ENCODE measurements at regions of chr11 and their contacts with region 1.

Region 1: GRCh38 chr11:11022125-11022730 is 164.4 kb upstream of the ZBED5 start:
- DNase-seq: peak in 1 of 2 donors; percentile 21
- ATAC-seq: no peak
- H3K4me3 ChIP-seq: no peak overlapping the region
- H3K27ac ChIP-seq: no peak overlapping the region
- H3K4me1 ChIP-seq: no peaks in the 10 kb centered on the region
- H3K27me3 ChIP-seq: no peaks in the 10 kb centered on the region
- CTCF ChIP-seq: peak in 8 of 9 donors; percentile 32 to 69 (median 62)

Region 2: DNA sequence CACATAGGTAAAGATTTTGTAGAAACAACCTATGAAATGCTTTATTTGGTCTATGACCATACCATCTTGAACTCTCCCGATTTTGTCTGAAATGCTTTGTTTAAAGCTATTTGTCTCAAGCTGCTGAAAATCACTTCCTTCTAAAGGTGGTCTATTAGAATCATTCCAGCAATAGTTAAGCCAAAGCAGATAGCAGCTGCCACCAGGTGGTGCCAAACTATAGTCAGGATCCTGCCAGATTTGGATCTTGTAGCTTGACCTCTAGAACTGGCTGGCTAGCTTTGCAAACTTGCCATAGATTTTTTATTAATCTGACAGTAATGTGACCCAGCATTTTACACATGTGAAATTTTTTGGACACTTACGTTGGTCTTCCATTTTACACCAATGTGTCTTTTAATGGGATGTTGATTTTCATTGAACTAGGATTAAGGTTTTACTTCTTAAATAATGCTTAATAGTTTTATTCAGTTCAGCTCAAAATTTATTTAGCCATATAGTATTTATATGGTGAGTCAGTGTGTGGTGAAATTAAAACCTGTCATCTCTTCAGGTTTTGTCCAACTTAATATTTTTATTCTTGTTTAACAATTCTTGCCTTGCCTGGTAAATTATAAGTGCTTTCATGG is 251.5 kb before region 1 on chr11:
- intact Hi-C with region 1: loop called in 1 of 10 experiments (anchors 5 kb)
- DNase-seq: peak; percentile 47 to 67
- ATAC-seq: peak in 7 of 8 donors; percentile 39 to 81 (median 75)
- H3K4me3 ChIP-seq: no peak overlapping the region
- H3K27ac ChIP-seq: peak overlapping the region in 8 of 10 donors; percentile 33 to 75 (median 58)
- H3K4me1 ChIP-seq: peaks cover 0 to 31% (median 10%) of the 10 kb centered on the region in 9 donors
- H3K27me3 ChIP-seq: no peaks in the 10 kb centered on the region
- CTCF ChIP-seq: peak; percentile 37 to 85 (median 72)

Region 3: DNA sequence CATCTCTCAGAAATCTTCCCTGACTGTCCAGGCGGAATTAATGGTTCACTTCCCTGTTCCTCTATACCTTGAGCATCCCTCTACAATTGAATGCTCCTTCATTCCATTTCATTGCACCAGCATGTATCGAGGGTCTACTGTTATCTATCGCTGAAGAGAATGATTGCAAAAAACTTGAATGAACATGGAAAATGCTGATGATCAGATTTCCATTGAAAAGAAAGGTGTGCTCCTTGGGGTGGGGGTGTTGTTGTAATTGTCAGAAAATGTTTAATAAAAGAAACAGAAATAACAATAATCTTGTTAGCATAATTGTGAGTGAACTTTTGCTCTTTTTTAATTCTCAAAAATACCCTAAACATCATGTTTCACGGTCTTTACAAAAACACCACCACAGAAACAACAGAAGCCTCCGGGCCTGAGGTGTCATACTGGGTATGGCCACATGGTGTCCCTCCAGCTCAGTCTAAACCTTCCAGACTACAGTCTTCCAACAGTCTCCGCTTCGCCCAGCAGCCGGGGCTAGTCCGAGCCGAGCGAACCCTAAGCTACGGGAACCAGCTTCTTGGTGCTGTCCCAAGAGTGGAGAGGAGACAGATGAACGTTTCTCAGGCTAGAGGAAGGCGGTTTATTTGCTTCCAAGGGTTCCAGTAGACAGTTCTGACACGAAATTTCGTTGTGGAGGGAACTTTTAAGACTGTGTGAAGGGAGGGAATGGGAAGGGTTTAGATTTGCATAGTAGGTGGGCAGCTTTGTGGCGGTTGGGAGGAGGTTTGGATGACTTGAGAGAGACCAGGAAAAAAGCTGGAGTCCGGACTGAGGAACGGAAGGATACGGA is 88.6 kb before region 1 on chr11:
- intact Hi-C with region 1: loop called (anchors 1 to 5 kb)
- DNase-seq: peak; percentile 87 to 91
- ATAC-seq: peak; percentile 78 to 93 (median 89)
- H3K4me3 ChIP-seq: peak overlapping the region; percentile 7 to 56 (median 52)
- H3K27ac ChIP-seq: peak overlapping the region; percentile 28 to 89 (median 72)
- H3K4me1 ChIP-seq: peaks cover 0 to 33% (median 17%) of the 10 kb centered on the region in 9 donors
- H3K27me3 ChIP-seq: peaks cover 0 to 49% (median 0%) of the 10 kb centered on the region in 7 donors
- CTCF ChIP-seq: peak; percentile 90 to 99 (median 95)

Region 4: GRCh38 chr11:11000579-11001283 is 21.5 kb before region 1 on chr11:
- intact Hi-C with region 1: no loop called
- DNase-seq: no peak
- ATAC-seq: no peak
- H3K4me3 ChIP-seq: no peak overlapping the region
- H3K27ac ChIP-seq: no peak overlapping the region
- H3K4me1 ChIP-seq: no peaks in the 10 kb centered on the region
- H3K27me3 ChIP-seq: peaks cover 0 to 29% (median 23%) of the 10 kb centered on the region in 7 donors
- CTCF ChIP-seq: no peak

Region 5: DNA sequence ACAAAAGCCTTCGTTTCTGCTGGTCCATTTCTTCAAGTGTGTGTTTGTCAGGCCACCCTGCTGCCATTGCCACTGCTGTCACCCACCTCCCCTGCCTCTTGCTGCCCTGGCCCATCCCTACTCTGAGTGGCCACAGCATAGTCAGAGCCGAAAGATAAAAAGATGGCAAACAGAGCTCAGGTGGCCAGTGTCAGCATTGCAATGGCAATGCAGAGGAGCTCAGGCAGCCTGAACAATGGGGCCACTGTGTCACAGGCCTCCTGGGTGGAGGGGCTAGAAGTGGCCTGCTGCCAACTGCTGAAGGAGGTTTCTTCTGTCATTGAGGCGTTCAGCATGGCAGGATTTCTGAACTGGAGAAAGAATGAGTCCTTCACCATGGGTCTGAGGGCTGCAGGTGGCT is 193.7 kb after region 1 on chr11:
- intact Hi-C with region 1: no loop called
- DNase-seq: no peak
- ATAC-seq: no peak
- H3K4me3 ChIP-seq: no peak overlapping the region
- H3K27ac ChIP-seq: no peak overlapping the region
- H3K4me1 ChIP-seq: peaks cover 0 to 37% (median 19%) of the 10 kb centered on the region in 9 donors
- H3K27me3 ChIP-seq: no peaks in the 10 kb centered on the region
- CTCF ChIP-seq: no peak